Keratinocyte (primary cell): ENCODE measurements at regions of chr15 and their contacts with region 1.

Region 1: DNA sequence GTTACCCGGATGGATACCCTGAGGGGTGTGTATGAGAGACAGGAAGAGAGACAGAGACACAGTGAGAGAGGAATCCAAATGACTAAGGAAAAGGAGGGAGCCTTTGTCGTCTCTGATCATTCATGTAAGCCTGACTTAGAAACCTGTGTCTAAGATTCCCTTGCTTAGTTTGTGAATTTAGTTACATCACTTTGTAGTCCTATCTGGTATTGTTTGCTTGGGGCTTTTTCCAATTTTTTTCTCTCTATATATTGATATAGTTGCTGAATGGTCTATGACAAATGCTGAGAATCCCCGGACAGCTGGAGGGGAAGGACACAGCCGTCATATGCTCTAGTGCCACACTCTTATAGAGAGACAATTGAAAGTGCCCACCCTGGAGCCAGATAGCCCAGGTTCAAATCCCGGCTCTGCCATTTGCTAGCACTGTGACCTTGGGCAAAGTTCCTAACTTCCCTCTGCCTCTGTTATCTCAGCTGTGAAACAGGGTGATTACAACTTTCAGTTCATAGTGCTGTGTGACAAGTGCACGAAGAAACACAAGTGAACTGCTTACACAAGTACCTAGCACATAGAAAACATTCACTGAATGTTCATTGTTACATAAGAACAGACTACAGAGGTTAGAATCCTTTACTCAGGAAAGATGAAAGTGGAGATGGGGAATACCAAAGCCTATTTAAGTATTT is 6.0 kb downstream of the SLC24A5 start:
- DNase-seq: peak; percentile 4
- H3K4me3 ChIP-seq: no peak overlapping the region
- H3K27ac ChIP-seq: no peak overlapping the region
- H3K4me1 ChIP-seq: no peaks in the 10 kb centered on the region
- H3K27me3 ChIP-seq: no peaks in the 10 kb centered on the region
- CTCF ChIP-seq: no peak

Region 2: DNA sequence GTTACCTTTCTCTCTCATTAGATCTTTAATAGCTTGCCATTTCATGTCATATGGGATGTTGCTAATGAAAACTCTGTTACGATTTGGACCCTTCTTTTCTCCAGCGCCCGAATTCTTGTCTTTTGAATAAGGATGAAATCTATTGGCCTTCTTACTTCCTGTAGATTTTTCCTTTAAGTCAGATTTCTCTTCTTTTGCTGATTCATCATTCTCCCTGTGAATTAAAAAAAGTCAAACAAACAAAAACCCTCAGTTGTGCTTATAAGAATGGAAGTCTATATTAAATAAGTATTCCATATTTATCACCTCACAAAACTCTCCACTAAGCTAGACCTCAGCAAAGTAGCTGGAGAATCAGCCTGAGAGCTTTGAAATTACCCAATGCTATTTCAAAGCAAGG is 41.8 kb after region 1 on chr15:
- dilution Hi-C with region 1: loop called (anchors 5 kb)
- DNase-seq: no peak
- H3K4me3 ChIP-seq: no peak overlapping the region
- H3K27ac ChIP-seq: no peak overlapping the region
- H3K4me1 ChIP-seq: no peaks in the 10 kb centered on the region
- H3K27me3 ChIP-seq: no peaks in the 10 kb centered on the region
- CTCF ChIP-seq: no peak